Activated CD8-positive, alpha-beta T cell treated with anti-CD3 and anti-CD28 coated beads, Interleukin-2, amount 10 ng/mL, durations not matched to agents 7 days and 5 days (primary cell): ENCODE measurements at regions of chr6 and their contacts with region 1.

Region 1: GRCh38 chr6:34887753-34888513 is at the start of gene TAF11:
- DNase-seq: peak; percentile 95
- ATAC-seq: peak; percentile 85
- H3K4me3 Mint-ChIP-seq: peak within 1 kb of the TSS; percentile 97
- H3K27ac Mint-ChIP-seq: peak within 1 kb of the TSS; percentile 99
- H3K4me1 Mint-ChIP-seq: peaks cover 35% of the 10 kb centered on the region
- H3K27me3 Mint-ChIP-seq: peaks cover 7% of the 10 kb centered on the region
- total RNA-seq, gene TAF11: 28.3 to 31.9 TPM

Region 2: DNA sequence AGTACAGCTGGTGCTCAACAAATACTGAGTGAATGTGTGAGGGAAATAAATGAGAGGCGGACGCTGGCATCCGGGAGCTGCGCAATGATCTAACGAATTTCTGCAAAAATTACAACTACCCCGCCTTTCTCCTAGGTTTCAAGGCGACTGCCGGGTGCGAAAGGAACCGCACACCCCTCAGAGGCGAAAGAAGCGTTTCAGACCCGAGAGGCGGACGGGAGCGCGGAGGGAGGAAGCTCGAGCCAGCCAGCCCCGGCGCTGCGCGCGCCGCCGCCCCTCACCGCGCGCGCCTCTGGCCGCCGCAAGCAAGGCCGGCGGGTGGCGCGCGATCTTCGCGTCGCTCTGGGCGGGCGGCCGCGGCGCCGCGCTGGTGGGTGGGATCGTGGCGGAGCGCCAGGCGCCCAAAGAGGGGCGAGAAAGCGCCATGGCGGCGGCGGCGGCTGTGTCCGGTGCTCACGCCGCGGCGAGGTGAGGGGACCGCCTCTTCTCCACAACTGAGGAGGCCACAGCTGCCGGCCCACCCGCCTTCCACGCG is 96.2 kb before region 1 on chr6 and contains the start of gene BLTP3A:
- CTCF ChIA-PET with region 1: interaction called, 3 read pairs
- POLR2A ChIA-PET with region 1: interaction called, 24 read pairs
- DNase-seq: peak; percentile 79
- ATAC-seq: peak; percentile 95
- H3K4me3 Mint-ChIP-seq: peak within 1 kb of the TSS; percentile 96
- H3K27ac Mint-ChIP-seq: peak within 1 kb of the TSS; percentile 96
- H3K4me1 Mint-ChIP-seq: peaks cover 20% of the 10 kb centered on the region
- H3K27me3 Mint-ChIP-seq: no peaks in the 10 kb centered on the region
- total RNA-seq, gene BLTP3A: 11.8 to 11.9 TPM

Region 3: DNA sequence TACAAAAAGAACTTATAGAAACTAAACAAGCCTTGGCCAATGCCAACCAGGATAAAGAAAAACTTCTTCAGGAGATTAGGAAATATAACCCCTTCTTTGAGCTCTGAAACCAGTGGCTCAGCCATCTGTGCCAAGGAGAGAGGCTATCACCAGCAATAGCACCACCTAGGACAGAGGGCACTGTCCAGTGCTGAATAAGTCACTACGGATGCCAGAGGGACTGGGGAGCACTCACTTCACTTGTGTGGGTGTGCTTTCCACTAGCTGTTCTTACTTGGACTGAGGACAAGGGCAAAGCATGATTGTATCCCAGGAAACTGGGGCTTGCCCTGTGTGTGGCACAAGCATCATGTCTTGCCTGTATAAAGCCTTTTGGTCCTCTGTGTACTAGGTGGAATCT is 15.6 kb before region 1 on chr6:
- CTCF ChIA-PET with region 1: interaction called, 5 read pairs
- POLR2A ChIA-PET with region 1: interaction called, 14 read pairs
- DNase-seq: no peak
- ATAC-seq: no peak
- H3K4me3 Mint-ChIP-seq: no peak overlapping the region
- H3K27ac Mint-ChIP-seq: no peak overlapping the region
- H3K4me1 Mint-ChIP-seq: no peaks in the 10 kb centered on the region
- H3K27me3 Mint-ChIP-seq: no peaks in the 10 kb centered on the region

Region 4: GRCh38 chr6:35008853-35009252 is 120.9 kb after region 1 on chr6:
- CTCF ChIA-PET with region 1: no interaction called
- POLR2A ChIA-PET with region 1: no interaction called
- DNase-seq: no peak
- ATAC-seq: no peak
- H3K4me3 Mint-ChIP-seq: no peak overlapping the region
- H3K27ac Mint-ChIP-seq: no peak overlapping the region
- H3K4me1 Mint-ChIP-seq: peaks cover 4% of the 10 kb centered on the region
- H3K27me3 Mint-ChIP-seq: no peaks in the 10 kb centered on the region